ENCODE measurements at regions of chr1 and their contacts with region 1.

Region 1: DNA sequence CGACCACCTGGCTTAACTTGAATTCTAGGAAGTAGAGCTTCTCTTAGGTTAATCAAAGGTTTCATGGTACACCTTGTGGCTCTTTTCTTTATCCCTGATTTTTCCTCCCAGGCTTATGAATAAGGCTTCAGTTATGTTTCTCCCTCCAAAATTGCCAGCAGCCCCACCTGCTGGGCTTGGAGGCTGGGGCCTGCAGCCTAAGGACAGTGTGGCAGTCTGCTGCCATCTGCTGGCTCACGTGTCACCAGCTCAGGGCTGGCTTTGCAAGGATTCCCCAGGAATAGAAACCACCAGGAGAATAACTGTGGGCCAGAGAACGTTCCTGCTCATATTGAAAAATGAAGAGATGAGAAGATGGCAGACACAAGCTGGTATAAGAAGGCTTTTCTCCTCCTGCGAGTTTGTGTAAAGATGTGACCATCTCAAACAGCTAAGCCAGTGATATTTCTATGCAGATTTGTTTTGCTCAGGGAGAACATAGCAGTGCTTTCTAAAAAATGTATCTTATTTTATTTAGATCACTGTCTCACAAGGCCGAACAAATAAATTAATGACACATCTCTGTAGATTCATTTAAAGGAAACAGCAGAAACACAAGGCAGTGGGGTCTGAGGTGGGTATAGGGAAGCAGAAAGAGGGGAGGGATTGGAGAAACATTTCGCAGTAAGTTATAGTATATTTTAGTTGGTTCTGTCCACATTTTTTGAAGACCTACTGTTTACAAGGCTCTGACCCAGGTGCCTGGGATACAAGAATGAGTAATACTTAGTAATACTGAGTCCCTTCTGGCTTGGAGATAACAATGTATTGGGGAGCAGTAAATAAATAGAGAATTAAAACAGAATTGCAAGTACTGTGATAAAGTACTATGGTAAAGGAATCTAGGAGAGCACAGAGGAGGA is 291.1 kb upstream of the SGIP1 start:
- DNase-seq: peak; percentile 63 to 72 (median 65)
- H3K4me3 ChIP-seq: no peak overlapping the region
- H3K4me3 Mint-ChIP-seq: no peak overlapping the region
- H3K27ac ChIP-seq: no peak overlapping the region
- H3K27ac Mint-ChIP-seq: no peak overlapping the region
- H3K4me1 ChIP-seq: peaks cover 50% of the 10 kb centered on the region
- H3K4me1 Mint-ChIP-seq: peaks cover 0 to 28% (median 22%) of the 10 kb centered on the region in 4 donors
- H3K27me3 ChIP-seq: no peaks in the 10 kb centered on the region
- H3K27me3 Mint-ChIP-seq: peaks cover 6 to 8% of the 10 kb centered on the region in 2 donors

Region 2: DNA sequence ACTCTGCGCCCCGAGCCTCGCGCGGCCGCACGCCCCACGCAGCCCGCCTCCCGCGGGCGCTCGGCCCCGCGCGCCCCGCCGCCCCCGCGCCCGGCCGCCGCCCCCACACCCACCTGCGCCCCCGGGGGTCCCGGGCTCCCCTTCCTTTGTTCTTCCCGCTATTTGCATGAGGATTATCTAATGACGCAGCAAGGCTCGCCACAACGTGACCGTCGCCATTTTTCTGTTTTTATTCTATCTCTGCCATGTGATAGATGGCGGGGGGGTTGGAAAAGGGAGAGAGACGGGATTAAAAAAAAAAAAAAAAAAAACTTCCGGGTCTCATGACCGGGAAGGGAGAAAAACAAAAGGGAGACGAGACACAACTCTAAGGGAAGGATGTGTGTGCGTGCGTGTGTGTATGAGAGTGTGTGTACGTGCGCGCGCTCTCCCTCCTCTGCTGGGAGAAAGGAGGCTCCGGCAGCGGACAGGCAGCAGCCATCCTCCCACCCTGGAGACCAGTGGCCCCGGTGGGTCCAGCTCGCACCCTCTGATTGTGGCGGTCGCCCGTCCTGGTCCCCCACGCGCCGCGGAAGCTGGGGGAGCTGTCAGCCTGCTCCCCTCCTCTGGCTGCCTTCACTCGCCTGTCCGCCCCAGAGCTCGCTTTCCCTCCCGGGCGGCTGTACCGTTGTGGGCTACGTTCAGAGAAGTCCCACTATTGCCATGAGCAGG is 1175.3 kb before region 1 on chr1:
- CTCF ChIA-PET with region 1: no interaction called
- POLR2A ChIA-PET with region 1: no interaction called
- intact Hi-C with region 1: loop called (anchors 10 kb)
- DNase-seq: peak; percentile 66 to 72 (median 69)
- H3K4me3 ChIP-seq: peak overlapping the region; percentile 84 to 97
- H3K4me3 Mint-ChIP-seq: peak overlapping the region; percentile 92 to 98 (median 96)
- H3K27ac ChIP-seq: peak overlapping the region; percentile 87
- H3K27ac Mint-ChIP-seq: peak overlapping the region; percentile 95 to 99 (median 98)
- H3K4me1 ChIP-seq: peaks cover 50% of the 10 kb centered on the region
- H3K4me1 Mint-ChIP-seq: peaks cover 39 to 66% (median 49%) of the 10 kb centered on the region in 4 donors
- H3K27me3 ChIP-seq: no peaks in the 10 kb centered on the region
- H3K27me3 Mint-ChIP-seq: no peaks in the 10 kb centered on the region

Region 3: GRCh38 chr1:65952696-65953095 is 290.2 kb before region 1 on chr1:
- CTCF ChIA-PET with region 1: interaction called, 65 read pairs
- POLR2A ChIA-PET with region 1: interaction called, 3 read pairs
- intact Hi-C with region 1: no loop called
- DNase-seq: no peak
- H3K4me3 ChIP-seq: no peak overlapping the region
- H3K4me3 Mint-ChIP-seq: no peak overlapping the region
- H3K27ac ChIP-seq: no peak overlapping the region
- H3K27ac Mint-ChIP-seq: no peak overlapping the region
- H3K4me1 ChIP-seq: no peaks in the 10 kb centered on the region
- H3K4me1 Mint-ChIP-seq: no peaks in the 10 kb centered on the region
- H3K27me3 ChIP-seq: no peaks in the 10 kb centered on the region
- H3K27me3 Mint-ChIP-seq: peaks cover 0 to 4% of the 10 kb centered on the region in 2 donors

Region 4: GRCh38 chr1:66182551-66183178 is 60.2 kb before region 1 on chr1:
- CTCF ChIA-PET with region 1: interaction called, 16 read pairs
- POLR2A ChIA-PET with region 1: interaction called, 3 read pairs
- intact Hi-C with region 1: no loop called
- DNase-seq: peak; percentile 44 to 77 (median 45)
- H3K4me3 ChIP-seq: no peak overlapping the region
- H3K4me3 Mint-ChIP-seq: peak overlapping the region in 4 of 8 donors; percentile 9 to 55 (median 20)
- H3K27ac ChIP-seq: no peak overlapping the region
- H3K27ac Mint-ChIP-seq: peak overlapping the region in 6 of 7 donors; percentile 22 to 76 (median 35)
- H3K4me1 ChIP-seq: peaks cover 24% of the 10 kb centered on the region
- H3K4me1 Mint-ChIP-seq: peaks cover 13 to 22% (median 18%) of the 10 kb centered on the region in 4 donors
- H3K27me3 ChIP-seq: no peaks in the 10 kb centered on the region
- H3K27me3 Mint-ChIP-seq: peaks cover 0 to 1% of the 10 kb centered on the region in 2 donors

Region 5: DNA sequence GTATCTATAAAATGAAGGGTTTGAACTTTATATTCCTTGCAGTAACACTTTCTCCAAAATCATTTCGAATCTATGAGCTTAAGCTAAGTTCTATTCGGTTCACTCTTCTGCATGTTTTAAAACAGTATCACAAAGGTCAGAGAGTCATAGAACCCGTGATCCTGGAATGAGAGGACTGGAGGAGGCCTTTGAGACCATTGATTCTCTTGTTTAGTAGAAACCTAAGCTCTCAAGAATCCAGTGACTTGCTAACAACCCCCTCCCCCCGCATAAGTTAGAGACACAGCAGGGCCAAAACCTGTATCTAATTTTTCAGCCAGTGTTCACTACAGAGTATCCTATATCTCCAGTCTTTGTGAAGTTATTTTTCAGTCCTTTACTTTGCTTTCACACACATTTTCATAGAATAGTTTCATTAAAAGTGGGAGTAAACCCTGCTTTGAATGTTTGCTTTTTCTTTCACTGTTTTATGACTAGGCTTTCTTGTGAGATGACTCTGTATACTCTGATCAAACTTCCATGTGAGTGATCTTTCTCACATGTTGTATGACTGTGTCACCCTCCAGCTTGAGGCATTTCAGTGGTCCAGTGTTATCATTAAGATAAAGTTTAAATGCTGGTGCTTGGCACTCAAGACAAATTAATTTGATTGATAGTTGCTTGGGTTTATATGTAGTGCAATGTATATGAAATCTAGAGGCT is 15.7 kb after region 1 on chr1:
- CTCF ChIA-PET with region 1: interaction called, 69 read pairs
- POLR2A ChIA-PET with region 1: interaction called, 4 read pairs
- intact Hi-C with region 1: no loop called
- DNase-seq: no peak
- H3K4me3 ChIP-seq: no peak overlapping the region
- H3K4me3 Mint-ChIP-seq: no peak overlapping the region
- H3K27ac ChIP-seq: no peak overlapping the region
- H3K27ac Mint-ChIP-seq: no peak overlapping the region
- H3K4me1 ChIP-seq: peaks cover 14% of the 10 kb centered on the region
- H3K4me1 Mint-ChIP-seq: peaks cover 19 to 50% (median 30%) of the 10 kb centered on the region in 4 donors
- H3K27me3 ChIP-seq: no peaks in the 10 kb centered on the region
- H3K27me3 Mint-ChIP-seq: no peaks in the 10 kb centered on the region

Region 6: GRCh38 chr1:66331657-66332547 is 89.0 kb after region 1 on chr1:
- CTCF ChIA-PET with region 1: interaction called, 4 read pairs
- POLR2A ChIA-PET with region 1: interaction called, 18 read pairs
- intact Hi-C with region 1: no loop called
- DNase-seq: peak; percentile 41 to 71 (median 45)
- H3K4me3 ChIP-seq: peak overlapping the region; percentile 79 to 96
- H3K4me3 Mint-ChIP-seq: peak overlapping the region; percentile 99 to 100 (median 100)
- H3K27ac ChIP-seq: peak overlapping the region; percentile 85
- H3K27ac Mint-ChIP-seq: peak overlapping the region; percentile 97 to 100 (median 98)
- H3K4me1 ChIP-seq: peaks cover 53% of the 10 kb centered on the region
- H3K4me1 Mint-ChIP-seq: peaks cover 26 to 78% (median 46%) of the 10 kb centered on the region in 4 donors
- H3K27me3 ChIP-seq: no peaks in the 10 kb centered on the region
- H3K27me3 Mint-ChIP-seq: no peaks in the 10 kb centered on the region

Region 7: GRCh38 chr1:66436378-66437145 is 193.7 kb after region 1 on chr1:
- CTCF ChIA-PET with region 1: interaction called, 108 read pairs
- POLR2A ChIA-PET with region 1: no interaction called
- intact Hi-C with region 1: no loop called
- DNase-seq: peak; percentile 42 to 56 (median 48)
- H3K4me3 ChIP-seq: no peak overlapping the region
- H3K4me3 Mint-ChIP-seq: peak overlapping the region in 4 of 8 donors; percentile 4 to 61 (median 31)
- H3K27ac ChIP-seq: no peak overlapping the region
- H3K27ac Mint-ChIP-seq: peak overlapping the region in 6 of 7 donors; percentile 0 to 92 (median 52)
- H3K4me1 ChIP-seq: peaks cover 21% of the 10 kb centered on the region
- H3K4me1 Mint-ChIP-seq: peaks cover 8 to 27% (median 19%) of the 10 kb centered on the region in 4 donors
- H3K27me3 ChIP-seq: no peaks in the 10 kb centered on the region
- H3K27me3 Mint-ChIP-seq: no peaks in the 10 kb centered on the region